GM23248 (cell line): ENCODE measurements at regions of chr6 and their contacts with region 1.

Region 1: DNA sequence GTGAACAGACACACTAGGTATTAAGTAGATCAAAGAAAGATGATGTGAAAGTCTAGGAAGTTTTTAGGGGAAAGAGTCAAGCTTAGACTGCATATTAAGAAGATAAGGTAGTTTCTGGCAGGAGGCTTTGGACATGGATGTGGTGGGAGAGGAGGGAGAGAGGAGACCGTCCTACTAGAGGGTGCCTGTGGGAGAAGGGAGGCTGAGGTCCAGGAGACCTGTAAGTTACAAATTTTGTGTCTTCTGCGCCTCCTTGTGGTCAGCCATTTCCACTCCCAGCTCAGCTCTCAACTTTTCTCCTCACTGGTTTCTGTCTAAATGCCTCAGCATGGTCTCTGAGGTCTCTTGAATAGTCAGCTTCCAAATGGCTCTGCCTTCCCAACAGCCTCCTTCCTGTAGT is 193.5 kb downstream of the UNC5CL start:
- DNase-seq: peak; percentile 55
- H3K4me3 ChIP-seq: no peak overlapping the region
- H3K27ac ChIP-seq: no peak overlapping the region
- H3K4me1 ChIP-seq: 0 out of 2 replicates have a peak, but pooled peaks cover 3% of the 10 kb centered on the region
- H3K27me3 ChIP-seq: peaks cover 29% of the 10 kb centered on the region

Region 2: DNA sequence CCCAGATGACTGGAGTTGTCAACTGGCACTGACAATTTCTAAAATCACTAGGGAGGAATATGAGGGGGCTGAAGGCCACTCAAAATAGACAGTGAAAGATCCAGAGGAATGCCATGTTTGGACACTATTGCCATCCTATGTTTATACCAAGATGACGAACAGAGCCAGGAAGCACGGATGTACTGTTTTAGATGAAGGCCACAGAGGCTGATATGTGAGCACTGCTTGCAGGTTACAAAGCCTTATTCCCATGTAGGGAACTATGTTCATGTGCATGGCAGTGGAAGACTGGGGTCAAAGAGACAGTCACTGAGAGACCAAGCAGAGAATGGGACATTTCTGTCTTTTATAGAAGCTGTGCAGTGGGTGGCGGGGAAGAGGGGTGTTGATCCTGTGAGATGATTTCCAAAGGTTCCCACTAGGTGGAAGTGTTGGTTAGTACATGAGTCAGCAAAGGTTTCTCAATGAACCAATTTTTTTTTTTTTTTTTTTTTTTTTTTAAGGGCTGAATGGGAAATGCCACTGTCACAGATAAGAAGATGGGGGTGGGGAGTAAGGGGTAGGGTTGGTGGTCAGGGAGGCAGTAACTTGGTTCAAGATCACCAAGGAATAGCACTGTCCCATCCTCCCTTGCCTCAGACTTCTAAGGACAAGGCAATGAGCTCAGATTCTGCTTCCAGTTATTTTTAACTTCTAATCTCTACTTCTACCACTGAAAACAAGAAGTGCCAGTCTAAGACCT is 864.5 kb before region 1 on chr6:
- in situ Hi-C with region 1: loop called (anchors 25 kb)
- DNase-seq: peak; percentile 75
- H3K4me3 ChIP-seq: no peak overlapping the region
- H3K27ac ChIP-seq: no peak overlapping the region
- H3K4me1 ChIP-seq: no peaks in the 10 kb centered on the region
- H3K27me3 ChIP-seq: 0 out of 2 replicates have a peak, but pooled peaks cover 3% of the 10 kb centered on the region

Region 3: GRCh38 chr6:40755046-40755681 is 90.4 kb before region 1 on chr6:
- in situ Hi-C with region 1: no loop called
- DNase-seq: peak; percentile 87
- H3K4me3 ChIP-seq: peak overlapping the region; percentile 48; the same call in 1 of the 2 replicates
- H3K27ac ChIP-seq: peak overlapping the region; percentile 37
- H3K4me1 ChIP-seq: peaks cover 10% of the 10 kb centered on the region; the same call in 1 of the 2 replicates
- H3K27me3 ChIP-seq: peaks cover 6% of the 10 kb centered on the region

Region 4: DNA sequence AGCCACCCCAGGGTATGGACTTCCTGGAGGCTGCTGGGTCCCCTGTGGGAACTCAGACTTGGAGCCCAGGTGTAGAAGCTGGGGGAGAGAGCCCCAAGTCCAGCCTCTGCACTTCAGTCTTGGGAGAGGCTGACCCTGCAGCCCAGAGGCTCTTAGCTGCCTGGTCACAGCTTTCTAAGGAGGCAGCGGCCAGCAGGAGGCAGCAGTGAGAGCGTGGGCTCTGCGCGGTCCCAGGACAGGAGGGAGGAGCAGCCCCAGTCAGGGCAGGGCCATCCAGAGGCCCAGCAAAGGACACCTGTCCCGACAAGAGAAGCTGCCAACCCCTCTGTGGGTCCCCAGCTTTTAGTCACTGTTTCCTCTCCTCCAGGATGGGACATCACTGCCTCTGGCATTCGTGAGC is 346.0 kb after region 1 on chr6:
- in situ Hi-C with region 1: no loop called
- DNase-seq: peak; percentile 36
- H3K4me3 ChIP-seq: no peak overlapping the region
- H3K27ac ChIP-seq: no peak overlapping the region
- H3K4me1 ChIP-seq: no peaks in the 10 kb centered on the region
- H3K27me3 ChIP-seq: no peaks in the 10 kb centered on the region